Activated naive CD4-positive, alpha-beta T cell treated with anti-CD3 and anti-CD28 coated beads for 36 hours (primary cell): ENCODE measurements at regions of chr2 and their contacts with region 1.

Region 1: DNA sequence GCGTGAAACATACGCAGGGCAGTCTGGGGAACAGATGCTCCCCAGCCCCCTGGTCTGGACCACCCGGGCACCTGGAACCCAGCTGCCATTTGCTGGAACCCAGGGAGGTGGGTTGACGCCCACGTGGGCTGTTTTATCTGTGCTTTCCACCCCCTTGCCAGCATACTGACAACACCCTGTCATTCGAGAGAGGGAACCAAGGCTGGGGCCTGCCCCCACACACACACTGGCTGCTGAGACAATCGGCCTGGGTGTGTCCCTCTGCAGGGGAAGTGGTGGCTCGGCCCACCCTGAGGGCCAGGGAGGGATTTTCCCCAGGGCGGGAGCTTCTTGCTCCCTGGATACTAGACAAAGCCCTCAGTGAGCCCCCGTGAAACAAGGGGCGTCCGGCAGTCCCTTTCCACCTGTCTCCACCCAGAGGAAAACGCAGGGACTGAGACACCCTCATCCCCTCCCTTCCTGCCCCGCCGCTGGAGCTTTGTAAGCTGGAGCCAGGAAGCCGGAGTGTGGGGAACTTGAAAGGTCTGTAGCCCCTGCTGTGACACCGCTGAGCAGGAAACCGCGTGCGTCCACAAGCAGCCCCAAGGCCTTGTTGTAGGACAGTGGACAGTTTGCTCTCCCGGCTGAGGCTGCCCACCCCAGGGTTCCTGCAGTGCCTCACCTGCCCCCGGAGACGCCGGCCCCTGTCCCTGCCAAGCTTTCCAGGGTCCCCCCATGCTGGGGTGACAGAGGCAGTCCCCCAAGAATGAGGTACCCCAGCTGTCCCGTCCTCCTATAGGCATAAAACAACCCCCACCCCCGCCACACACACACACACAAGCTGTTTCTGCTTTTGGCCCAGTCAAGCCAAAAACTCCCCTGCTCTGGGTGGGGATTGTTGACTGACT is 14.1 kb upstream of the KLF11 start:
- DNase-seq: peak; percentile 77
- H3K4me3 Mint-ChIP-seq: no peak overlapping the region
- H3K27ac Mint-ChIP-seq: no peak overlapping the region
- H3K4me1 Mint-ChIP-seq: peaks cover 16% of the 10 kb centered on the region
- H3K27me3 Mint-ChIP-seq: no peaks in the 10 kb centered on the region

Region 2: GRCh38 chr2:9071032-9071431 is 958.2 kb before region 1 on chr2:
- CTCF ChIA-PET with region 1: no interaction called
- intact Hi-C with region 1: no loop called
- DNase-seq: peak; percentile 22
- H3K4me3 Mint-ChIP-seq: no peak overlapping the region
- H3K27ac Mint-ChIP-seq: no peak overlapping the region
- H3K4me1 Mint-ChIP-seq: no peaks in the 10 kb centered on the region
- H3K27me3 Mint-ChIP-seq: peaks cover 20% of the 10 kb centered on the region

Region 3: GRCh38 chr2:9990735-9991134 is 38.5 kb before region 1 on chr2:
- CTCF ChIA-PET with region 1: interaction called, 15 read pairs
- intact Hi-C with region 1: loop called (anchors 2 kb)
- DNase-seq: peak; percentile 33
- H3K4me3 Mint-ChIP-seq: no peak overlapping the region
- H3K27ac Mint-ChIP-seq: no peak overlapping the region
- H3K4me1 Mint-ChIP-seq: peaks cover 13% of the 10 kb centered on the region
- H3K27me3 Mint-ChIP-seq: no peaks in the 10 kb centered on the region